ENCODE measurements at regions of chr5 and their contacts with region 1.

Region 1: GRCh38 chr5:45691656-45692055 is 4.5 kb downstream of the HCN1 start:
- DNase-seq: no peak

Region 2: GRCh38 chr5:45623855-45624254 is 67.8 kb before region 1 on chr5:
- intact Hi-C with region 1: loop called in 1 of 2 experiments (anchors 2 kb)
- DNase-seq: no peak

Measured in posterior vena cava (tissue), 2 donors.